PC-9 (cell line): ENCODE measurements at regions of chr10 and their contacts with region 1.

Region 1: GRCh38 chr10:113199459-113199858 is 249.4 kb downstream of the TCF7L2 start:
- DNase-seq: no peak
- H3K4me3 ChIP-seq: no peak overlapping the region
- H3K27ac ChIP-seq: no peak overlapping the region
- H3K4me1 ChIP-seq: no peaks in the 10 kb centered on the region
- H3K27me3 ChIP-seq: no peaks in the 10 kb centered on the region
- CTCF ChIP-seq: no peak

Region 2: DNA sequence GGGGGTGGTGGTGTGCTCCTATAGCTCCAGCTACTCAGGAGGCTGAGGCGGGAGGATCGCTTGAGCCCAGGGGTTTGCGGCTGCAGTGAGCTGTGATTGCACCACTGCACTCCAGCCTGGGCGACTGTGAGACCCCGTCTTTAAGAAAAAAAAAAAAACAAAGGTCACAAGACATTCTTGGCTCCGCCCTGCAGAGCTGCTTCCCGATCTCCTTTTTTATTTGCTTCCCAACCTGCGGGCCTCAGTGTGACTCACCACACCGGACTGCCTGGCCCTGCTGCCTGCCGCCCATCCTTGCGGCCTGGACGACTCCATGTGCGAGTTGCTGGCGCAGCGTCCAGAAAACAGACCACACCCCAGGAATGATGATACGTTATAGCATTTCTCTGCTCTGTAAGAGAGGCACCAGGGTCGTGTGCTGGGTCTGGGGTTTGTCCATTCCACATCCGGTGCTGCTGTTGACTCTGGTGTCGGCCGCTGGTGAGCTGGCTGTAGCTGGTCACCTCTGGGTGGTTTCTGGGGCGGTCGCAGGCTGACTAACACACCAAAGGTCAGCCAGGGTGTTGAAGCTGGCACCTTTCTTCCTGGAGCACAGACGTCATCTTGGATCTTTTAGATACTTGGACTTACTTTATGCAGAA is 125.8 kb before region 1 on chr10:
- CTCF ChIA-PET with region 1: no interaction called
- POLR2A ChIA-PET with region 1: no interaction called
- intact Hi-C with region 1: no loop called
- DNase-seq: peak; percentile 89 to 96
- H3K4me3 ChIP-seq: peak overlapping the region; percentile 28; the same call in 1 of the 2 replicates
- H3K27ac ChIP-seq: peak overlapping the region; percentile 84
- H3K4me1 ChIP-seq: peaks cover 27% of the 10 kb centered on the region
- H3K27me3 ChIP-seq: no peaks in the 10 kb centered on the region
- CTCF ChIP-seq: no peak

Region 3: DNA sequence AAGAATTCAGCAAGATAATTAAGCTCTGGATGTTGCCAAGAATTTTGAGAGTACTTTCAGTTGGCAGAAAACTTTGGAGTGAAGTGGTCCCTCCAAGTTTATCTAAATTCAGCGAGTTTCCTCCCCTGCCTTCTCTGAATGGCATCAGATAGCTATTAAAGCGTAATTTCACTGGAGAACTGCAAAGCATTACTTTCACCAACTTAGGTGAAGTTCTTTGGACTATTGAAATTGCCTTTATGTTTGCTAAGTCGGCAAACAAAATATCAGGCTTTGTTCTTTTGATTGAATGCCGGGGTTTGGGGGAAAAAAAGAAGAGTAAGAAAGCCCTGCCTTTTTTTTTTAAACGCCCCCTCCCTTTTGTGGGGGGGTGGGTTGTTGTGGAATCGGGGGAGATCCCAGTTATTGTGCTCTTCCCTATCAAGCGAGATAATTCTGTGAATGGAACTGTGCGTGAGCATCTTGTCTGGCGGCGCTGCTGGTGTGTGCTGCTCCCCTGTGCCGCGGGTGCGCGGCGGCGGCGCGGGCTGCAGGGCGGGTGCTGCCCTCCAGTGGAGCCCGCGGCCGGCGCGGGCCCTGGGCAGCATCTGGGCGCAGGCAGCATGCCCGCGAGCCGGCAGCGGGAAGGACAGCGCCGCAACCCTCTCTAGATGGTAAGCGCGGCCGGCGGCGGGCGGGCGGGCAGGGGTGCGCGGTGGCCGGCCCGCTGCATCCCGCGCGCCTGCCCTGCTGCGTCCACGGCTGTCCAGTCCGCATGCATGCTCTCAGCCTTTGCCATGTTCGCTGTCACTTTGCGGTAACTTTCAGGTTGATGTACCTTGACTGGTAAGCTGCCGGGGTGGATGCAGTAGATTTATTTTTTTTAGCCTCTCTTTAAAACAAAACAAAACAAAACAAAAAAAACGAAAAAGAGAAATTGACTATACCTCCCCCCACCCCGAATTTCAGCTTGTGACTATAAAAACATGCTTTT is 72.9 kb before region 1 on chr10:
- CTCF ChIA-PET with region 1: no interaction called
- POLR2A ChIA-PET with region 1: no interaction called
- intact Hi-C with region 1: no loop called
- DNase-seq: peak in 1 of 2 experiments; percentile 63
- H3K4me3 ChIP-seq: peak overlapping the region; percentile 51; the same call in 1 of the 2 replicates
- H3K27ac ChIP-seq: no peak overlapping the region
- H3K4me1 ChIP-seq: peaks cover 19% of the 10 kb centered on the region
- H3K27me3 ChIP-seq: no peaks in the 10 kb centered on the region
- CTCF ChIP-seq: peak; percentile 42; the same call in 1 of the 2 replicates

Region 4: DNA sequence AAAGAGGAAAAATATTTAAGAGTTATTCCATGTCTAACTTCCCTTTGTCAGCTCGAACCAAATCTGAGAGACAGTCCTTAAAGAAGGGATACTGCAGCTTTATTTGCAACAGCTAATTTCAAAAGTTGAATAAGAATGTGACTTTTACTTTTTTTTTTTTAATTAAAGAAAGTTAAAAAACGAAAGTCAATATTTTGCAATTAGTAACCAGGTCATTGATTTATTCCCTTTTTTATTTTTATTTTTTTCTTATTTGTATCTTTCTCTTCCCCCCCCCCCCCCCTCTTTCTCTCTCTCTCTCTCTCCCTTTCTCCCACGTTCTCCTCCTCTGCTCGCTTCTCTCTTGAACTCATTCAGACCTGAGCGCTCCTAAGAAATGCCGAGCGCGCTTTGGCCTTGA is 39.9 kb before region 1 on chr10:
- CTCF ChIA-PET with region 1: no interaction called
- POLR2A ChIA-PET with region 1: interaction called, 19 read pairs
- intact Hi-C with region 1: no loop called
- DNase-seq: no peak
- H3K4me3 ChIP-seq: no peak overlapping the region
- H3K27ac ChIP-seq: no peak overlapping the region
- H3K4me1 ChIP-seq: no peaks in the 10 kb centered on the region
- H3K27me3 ChIP-seq: no peaks in the 10 kb centered on the region
- CTCF ChIP-seq: no peak